A673 (cell line): ENCODE measurements at regions of chr2 and their contacts with region 1.

Region 1: GRCh38 chr2:48107326-48107925 is 201.1 kb upstream of the FBXO11 start:
- DNase-seq: peak; percentile 24
- H3K4me3 ChIP-seq: no peak overlapping the region
- H3K27ac ChIP-seq: no peak overlapping the region
- H3K4me1 ChIP-seq: peaks cover 9% of the 10 kb centered on the region
- H3K27me3 ChIP-seq: no peaks in the 10 kb centered on the region
- CTCF ChIP-seq: no peak

Region 2: DNA sequence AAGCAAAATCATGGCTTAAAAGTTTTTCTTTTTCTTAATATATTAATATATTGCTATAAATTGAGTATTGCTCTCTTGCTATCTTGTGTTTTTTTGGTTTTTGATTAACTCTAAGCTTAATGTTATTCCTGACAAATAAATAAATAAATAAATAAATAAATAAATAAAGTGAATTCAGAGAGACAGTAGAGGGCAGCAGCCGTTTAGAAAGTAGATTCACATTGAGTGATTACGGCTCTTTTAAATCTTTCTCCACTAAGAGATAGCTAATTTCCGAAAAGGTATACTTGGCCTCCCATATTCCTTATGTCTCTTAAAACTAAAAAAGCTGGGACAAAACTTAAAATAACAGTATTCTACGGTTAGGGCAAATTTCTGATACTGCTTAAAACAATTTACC is 670.1 kb before region 1 on chr2:
- CTCF ChIA-PET with region 1: interaction called, 6 read pairs
- POLR2A ChIA-PET with region 1: no interaction called
- intact Hi-C with region 1: loop called (anchors 10 kb)
- DNase-seq: peak; percentile 46
- H3K4me3 ChIP-seq: no peak overlapping the region
- H3K27ac ChIP-seq: no peak overlapping the region
- H3K4me1 ChIP-seq: no peaks in the 10 kb centered on the region
- H3K27me3 ChIP-seq: no peaks in the 10 kb centered on the region
- CTCF ChIP-seq: peak; percentile 60

Region 3: GRCh38 chr2:47862949-47863348 is 244.5 kb before region 1 on chr2:
- CTCF ChIA-PET with region 1: interaction called, 4 read pairs
- POLR2A ChIA-PET with region 1: no interaction called
- intact Hi-C with region 1: loop called (anchors 1 kb)
- DNase-seq: no peak
- H3K4me3 ChIP-seq: no peak overlapping the region
- H3K27ac ChIP-seq: no peak overlapping the region
- H3K4me1 ChIP-seq: peaks cover 9% of the 10 kb centered on the region
- H3K27me3 ChIP-seq: no peaks in the 10 kb centered on the region
- CTCF ChIP-seq: no peak

Region 4: DNA sequence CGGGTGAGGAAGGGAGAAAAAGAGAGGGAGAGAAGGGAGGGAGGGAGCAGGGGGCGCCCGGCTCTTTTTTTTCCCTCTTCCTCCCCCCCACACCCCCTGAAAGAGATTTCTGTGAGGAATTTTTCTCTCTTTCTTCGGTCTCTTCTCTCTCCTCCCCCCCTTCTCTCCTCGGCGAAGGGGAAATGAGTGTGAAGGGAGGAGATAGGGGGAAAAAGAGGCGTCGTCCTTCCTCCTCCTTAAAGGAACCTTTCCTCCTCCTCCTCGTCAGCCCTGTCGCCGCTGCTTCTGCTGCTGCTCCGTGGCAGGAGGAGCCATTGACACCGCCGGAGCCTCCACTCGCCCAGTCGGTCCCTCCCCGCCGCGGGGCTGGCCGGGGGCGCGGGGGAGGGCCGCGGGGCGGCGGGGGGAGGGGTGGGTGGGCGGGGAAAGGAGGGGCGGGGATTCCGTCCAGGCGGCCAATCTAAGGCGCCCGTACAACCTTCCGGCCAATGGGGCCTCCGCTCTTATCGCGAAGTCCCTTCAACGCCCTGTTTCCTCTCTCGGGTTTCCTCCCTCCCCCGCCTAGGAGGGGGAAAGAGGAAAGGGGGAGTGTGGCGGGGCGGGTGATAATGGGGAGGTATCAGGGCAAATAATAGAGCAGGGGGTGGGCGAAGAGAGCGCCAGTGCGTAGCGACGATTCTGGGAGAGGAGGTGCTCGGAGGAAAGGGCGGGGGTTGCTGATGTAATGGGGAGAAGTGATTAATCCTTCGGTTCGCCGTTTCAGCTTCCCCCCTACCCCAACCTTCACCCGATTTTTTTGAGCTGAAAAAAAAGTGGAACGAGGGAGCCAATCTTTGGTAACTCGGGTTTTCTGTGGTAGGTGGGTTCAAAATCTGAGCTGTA is 201.0 kb before region 1 on chr2 and contains the start of gene FBXO11:
- CTCF ChIA-PET with region 1: interaction called, 4 read pairs
- POLR2A ChIA-PET with region 1: no interaction called
- intact Hi-C with region 1: loop called (anchors 1 kb)
- DNase-seq: peak; percentile 100
- H3K4me3 ChIP-seq: peak within 1 kb of the TSS; percentile 86
- H3K27ac ChIP-seq: peak within 1 kb of the TSS; percentile 98
- H3K4me1 ChIP-seq: peaks cover 20% of the 10 kb centered on the region
- H3K27me3 ChIP-seq: no peaks in the 10 kb centered on the region
- CTCF ChIP-seq: peak; percentile 67
- total RNA-seq, gene FBXO11: 73.9 and 84.0 TPM in 2 replicates

Region 5: DNA sequence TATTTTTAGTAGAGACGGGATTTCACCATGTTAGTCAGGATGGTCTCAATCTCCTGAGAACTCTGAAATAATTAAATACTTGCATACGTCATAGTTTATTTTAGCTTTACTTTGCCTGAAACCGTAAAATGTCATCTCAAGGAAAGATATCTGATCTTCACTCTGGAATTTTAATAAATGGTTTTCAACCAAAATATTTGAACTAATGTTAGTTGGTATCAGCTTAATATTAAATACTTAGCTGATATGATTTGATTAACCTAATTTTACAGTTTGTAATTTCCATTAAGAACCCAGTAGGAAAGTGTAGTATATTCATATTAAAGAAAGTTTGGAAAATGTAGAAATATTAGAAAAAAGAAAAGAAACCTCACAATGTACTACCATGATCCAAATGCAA is 381.1 kb after region 1 on chr2:
- CTCF ChIA-PET with region 1: no interaction called
- POLR2A ChIA-PET with region 1: no interaction called
- intact Hi-C with region 1: no loop called
- DNase-seq: no peak
- H3K4me3 ChIP-seq: no peak overlapping the region
- H3K27ac ChIP-seq: no peak overlapping the region
- H3K4me1 ChIP-seq: peaks cover 11% of the 10 kb centered on the region
- H3K27me3 ChIP-seq: no peaks in the 10 kb centered on the region
- CTCF ChIP-seq: no peak